WTC11 (cell line): ENCODE measurements at regions of chr5 and their contacts with region 1.

Region 1: GRCh38 chr5:6435356-6435755 is 13.3 kb upstream of the UBE2QL1 start:
- DNase-seq: peak; percentile 78
- ATAC-seq: peak; percentile 93
- H3K4me3 Mint-ChIP-seq: no peak overlapping the region
- H3K27ac Mint-ChIP-seq: no peak overlapping the region
- H3K4me1 Mint-ChIP-seq: no peaks in the 10 kb centered on the region
- H3K27me3 Mint-ChIP-seq: peaks cover 35% of the 10 kb centered on the region
- CTCF ChIP-seq: 0 out of 2 replicates have a peak, but pooled peaks have one; percentile 22

Region 2: GRCh38 chr5:6084381-6084780 is 351.0 kb before region 1 on chr5:
- CTCF ChIA-PET with region 1: no interaction called
- POLR2A ChIA-PET with region 1: no interaction called
- DNase-seq: no peak
- ATAC-seq: no peak
- H3K4me3 Mint-ChIP-seq: no peak overlapping the region
- H3K27ac Mint-ChIP-seq: no peak overlapping the region
- H3K4me1 Mint-ChIP-seq: peaks cover 11% of the 10 kb centered on the region
- H3K27me3 Mint-ChIP-seq: no peaks in the 10 kb centered on the region
- CTCF ChIP-seq: no peak

Region 3: DNA sequence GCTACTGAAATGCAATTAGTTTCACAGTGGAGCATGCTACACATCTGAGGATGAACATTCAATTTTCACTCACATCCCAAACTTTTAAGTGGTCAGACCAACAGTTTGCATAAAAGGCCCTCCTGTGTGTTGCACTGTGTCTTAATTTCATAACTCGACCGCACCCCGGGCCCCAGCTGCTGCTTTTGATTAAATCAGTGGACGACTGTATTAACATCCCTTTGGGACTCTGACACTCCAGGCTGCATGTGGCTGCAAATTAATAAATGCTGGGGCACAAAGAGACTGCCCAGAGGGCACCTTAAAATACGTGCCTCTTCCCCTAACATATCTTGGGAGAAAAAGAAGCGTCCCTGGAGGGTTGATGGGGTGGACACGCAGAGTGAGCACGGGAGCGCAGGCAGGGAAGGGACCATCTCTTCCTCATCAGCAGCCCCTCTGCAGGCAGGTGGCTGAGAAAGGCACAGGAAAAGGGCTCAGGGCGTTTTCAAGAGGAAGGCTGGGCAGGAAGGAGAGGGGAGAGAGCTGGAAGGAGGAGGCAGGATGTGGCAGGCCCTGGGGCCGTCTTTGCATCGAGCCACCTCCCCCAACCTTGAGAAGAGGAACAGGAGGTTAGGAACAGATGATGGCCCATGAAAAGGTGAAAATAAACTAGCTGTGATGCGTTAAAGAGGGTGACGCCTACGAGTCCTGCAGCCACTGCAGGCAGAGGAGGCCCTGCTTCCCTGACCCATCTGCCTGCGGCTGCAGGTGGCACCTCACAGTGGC is 75.6 kb before region 1 on chr5:
- CTCF ChIA-PET with region 1: interaction called, 13 read pairs
- POLR2A ChIA-PET with region 1: no interaction called
- DNase-seq: peak; percentile 34
- ATAC-seq: peak; percentile 88
- H3K4me3 Mint-ChIP-seq: no peak overlapping the region
- H3K27ac Mint-ChIP-seq: peak overlapping the region; percentile 11; the same call in 1 of the 2 replicates
- H3K4me1 Mint-ChIP-seq: peaks cover 11% of the 10 kb centered on the region
- H3K27me3 Mint-ChIP-seq: no peaks in the 10 kb centered on the region
- CTCF ChIP-seq: no peak

Region 4: GRCh38 chr5:6377905-6378765 is 57.2 kb before region 1 on chr5 and contains the start of gene MED10:
- CTCF ChIA-PET with region 1: interaction called, 17 read pairs
- POLR2A ChIA-PET with region 1: no interaction called
- DNase-seq: peak; percentile 97
- ATAC-seq: peak; percentile 99
- H3K4me3 Mint-ChIP-seq: peak within 1 kb of the TSS; percentile 96
- H3K27ac Mint-ChIP-seq: peak within 1 kb of the TSS; percentile 90
- H3K4me1 Mint-ChIP-seq: peaks cover 18% of the 10 kb centered on the region
- H3K27me3 Mint-ChIP-seq: no peaks in the 10 kb centered on the region; the same call in 1 of the 2 replicates
- CTCF ChIP-seq: no peak
- total RNA-seq, gene MED10: 15.7 to 17.9 TPM (median 17.2 TPM) in 3 replicates

Region 5: GRCh38 chr5:6424110-6424659 is 11.2 kb before region 1 on chr5:
- CTCF ChIA-PET with region 1: interaction called, 11 read pairs
- POLR2A ChIA-PET with region 1: no interaction called
- DNase-seq: no peak
- ATAC-seq: no peak
- H3K4me3 Mint-ChIP-seq: no peak overlapping the region
- H3K27ac Mint-ChIP-seq: no peak overlapping the region
- H3K4me1 Mint-ChIP-seq: no peaks in the 10 kb centered on the region
- H3K27me3 Mint-ChIP-seq: peaks cover 10% of the 10 kb centered on the region; the same call in 1 of the 2 replicates
- CTCF ChIP-seq: no peak